Ovary (tissue), 10 donors: ENCODE measurements at regions of chr3 and their contacts with region 1.

Region 1: DNA sequence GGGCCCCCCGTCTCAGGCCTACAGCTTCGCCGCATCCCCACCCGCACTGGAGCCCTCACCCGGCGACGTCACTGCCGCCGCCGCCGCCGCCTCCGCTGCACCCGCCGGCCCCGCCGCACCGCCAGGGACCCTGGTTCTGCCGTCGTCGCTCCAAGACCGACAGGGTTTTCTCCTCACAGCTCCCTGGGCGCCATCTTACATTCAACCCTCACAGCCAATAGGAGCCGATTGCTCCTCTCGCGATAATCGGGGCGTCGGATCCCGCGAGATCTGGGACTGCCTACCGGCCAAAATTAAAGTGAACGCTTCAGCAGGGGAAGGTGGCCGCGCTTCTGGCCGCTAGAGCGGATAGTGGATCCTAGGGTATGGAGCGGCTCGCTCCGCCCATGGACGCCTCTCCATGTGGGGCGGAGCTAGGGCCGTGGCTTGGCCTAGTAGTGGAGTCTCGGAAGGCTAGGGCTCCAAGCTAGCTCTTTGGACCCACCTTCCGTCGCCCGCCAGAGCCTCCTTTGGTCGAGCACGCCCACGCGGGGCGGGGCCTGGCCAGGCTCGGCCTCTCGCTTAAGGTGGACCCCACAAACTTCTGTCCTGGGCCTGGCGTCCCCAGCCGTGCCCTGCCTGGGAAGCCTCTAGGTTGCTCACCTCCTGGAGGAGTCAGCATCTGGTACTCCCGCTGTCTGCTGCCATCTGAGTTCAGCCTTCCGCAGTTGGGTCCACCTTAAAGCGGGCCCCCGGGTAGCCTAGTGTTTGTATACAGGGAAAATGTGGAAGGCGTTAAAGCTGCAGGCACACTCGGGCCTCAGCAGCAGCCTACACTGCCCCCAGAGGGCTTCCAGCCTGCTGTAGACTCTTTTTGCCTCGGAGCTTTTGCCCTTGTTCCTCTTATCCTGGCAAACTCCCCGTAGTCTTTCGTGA is at the start of gene QRICH1:
- DNase-seq: peak; percentile 97 to 98 (median 98)
- H3K4me3 ChIP-seq: peak within 1 kb of the TSS; percentile 99
- H3K27ac ChIP-seq: peak within 1 kb of the TSS; percentile 86 to 88
- H3K4me1 ChIP-seq: peaks cover 10% of the 10 kb centered on the region
- H3K27me3 ChIP-seq: no peaks in the 10 kb centered on the region
- CTCF ChIP-seq: peak in 2 of 3 donors; percentile 43 to 58
- EP300 ChIP-seq: no peak
- POLR2A ChIP-seq: peak; percentile 72
- total RNA-seq, gene QRICH1: 56.9 to 104 (median 90.4) TPM

Region 2: GRCh38 chr3:49032646-49033304 is 61.3 kb before region 1 on chr3:
- intact Hi-C with region 1: loop called in 1 of 4 experiments (anchors 5 kb)
- DNase-seq: no peak
- H3K4me3 ChIP-seq: no peak overlapping the region
- H3K27ac ChIP-seq: no peak overlapping the region
- H3K4me1 ChIP-seq: peaks cover 2% of the 10 kb centered on the region
- H3K27me3 ChIP-seq: no peaks in the 10 kb centered on the region
- CTCF ChIP-seq: no peak
- EP300 ChIP-seq: no peak
- POLR2A ChIP-seq: no peak